Activated naive CD4-positive, alpha-beta T cell treated with anti-CD3 and anti-CD28 coated beads, Interleukin-2, amount 10 ng/mL, durations not matched to agents 7 days and 5 days (primary cell): ENCODE measurements at regions of chr10 and their contacts with region 1.

Region 1: GRCh38 chr10:124530215-124530665 is 68.6 kb downstream of the LHPP start:
- DNase-seq: peak; percentile 92
- H3K4me3 Mint-ChIP-seq: no peak overlapping the region
- H3K27ac Mint-ChIP-seq: no peak overlapping the region
- H3K4me1 Mint-ChIP-seq: peaks cover 6% of the 10 kb centered on the region
- H3K27me3 Mint-ChIP-seq: no peaks in the 10 kb centered on the region

Region 2: DNA sequence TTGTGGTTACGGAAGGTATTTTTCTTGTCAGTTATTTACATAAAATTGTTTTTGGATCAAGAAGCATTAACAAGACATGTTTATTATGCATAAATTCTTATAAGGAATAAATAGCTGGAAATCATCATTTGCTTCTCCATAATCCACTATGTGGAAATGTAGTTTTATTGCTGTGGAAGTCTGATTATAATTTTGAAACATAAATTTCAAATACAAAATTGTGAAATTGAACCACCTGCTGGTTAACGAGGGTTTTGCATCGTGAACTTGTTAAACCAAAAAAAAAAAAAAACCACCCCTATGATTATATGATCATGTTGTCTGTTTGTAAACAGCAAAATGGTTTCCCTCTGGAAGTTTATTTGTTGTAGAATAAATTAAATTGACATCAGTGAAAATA is 297.2 kb after region 1 on chr10:
- CTCF ChIA-PET with region 1: interaction called, 12 read pairs
- DNase-seq: peak; percentile 25
- H3K4me3 Mint-ChIP-seq: no peak overlapping the region
- H3K27ac Mint-ChIP-seq: no peak overlapping the region
- H3K4me1 Mint-ChIP-seq: no peaks in the 10 kb centered on the region
- H3K27me3 Mint-ChIP-seq: no peaks in the 10 kb centered on the region